Caco-2 (cell line): ENCODE measurements at regions of chr13 and their contacts with region 1.

Region 1: GRCh38 chr13:91406619-91407018 is 8.2 kb downstream of the GPC5 start:
- DNase-seq: peak; percentile 50 to 73
- H3K4me3 ChIP-seq: no peak overlapping the region
- H3K4me3 Mint-ChIP-seq: no peak overlapping the region
- H3K27ac Mint-ChIP-seq: peak overlapping the region; percentile 16
- H3K4me1 ChIP-seq: no peaks in the 10 kb centered on the region; the same call in 1 of the 2 replicates
- H3K4me1 Mint-ChIP-seq: no peaks in the 10 kb centered on the region
- H3K27me3 ChIP-seq: no peaks in the 10 kb centered on the region
- H3K27me3 Mint-ChIP-seq: peaks cover 3% of the 10 kb centered on the region
- CTCF ChIP-seq: peak; percentile 62 to 65

Region 2: GRCh38 chr13:91375116-91375729 is 31.4 kb before region 1 on chr13:
- CTCF ChIA-PET with region 1: interaction called, 4 read pairs
- POLR2A ChIA-PET with region 1: no interaction called
- intact Hi-C with region 1: loop called (anchors 1 kb)
- DNase-seq: peak in 1 of 2 experiments; percentile 30
- H3K4me3 ChIP-seq: no peak overlapping the region
- H3K4me3 Mint-ChIP-seq: no peak overlapping the region
- H3K27ac Mint-ChIP-seq: no peak overlapping the region
- H3K4me1 ChIP-seq: 0 out of 2 replicates have a peak, but pooled peaks cover 3% of the 10 kb centered on the region
- H3K4me1 Mint-ChIP-seq: no peaks in the 10 kb centered on the region
- H3K27me3 ChIP-seq: no peaks in the 10 kb centered on the region
- H3K27me3 Mint-ChIP-seq: no peaks in the 10 kb centered on the region
- CTCF ChIP-seq: peak; percentile 63 to 67